ENCODE measurements at regions of chr5 and their contacts with region 1.

Region 1: GRCh38 chr5:58460732-58461286 is 923 bp upstream of the PLK2 start:
- DNase-seq: peak; percentile 94
- H3K4me3 Mint-ChIP-seq: peak overlapping the region; percentile 92
- H3K27ac Mint-ChIP-seq: peak overlapping the region; percentile 96
- H3K4me1 Mint-ChIP-seq: peaks cover 29% of the 10 kb centered on the region
- H3K27me3 Mint-ChIP-seq: no peaks in the 10 kb centered on the region
- CTCF ChIP-seq: peak; percentile 72

Region 2: GRCh38 chr5:57298295-57298984 is 1162.4 kb before region 1 on chr5:
- CTCF ChIA-PET with region 1: interaction called, 43 read pairs
- POLR2A ChIA-PET with region 1: interaction called, 8 read pairs
- intact Hi-C with region 1: loop called (anchors 1 kb)
- DNase-seq: peak; percentile 89
- H3K4me3 Mint-ChIP-seq: no peak overlapping the region
- H3K27ac Mint-ChIP-seq: no peak overlapping the region
- H3K4me1 Mint-ChIP-seq: peaks cover 21% of the 10 kb centered on the region
- H3K27me3 Mint-ChIP-seq: no peaks in the 10 kb centered on the region
- CTCF ChIP-seq: peak; percentile 65

Region 3: DNA sequence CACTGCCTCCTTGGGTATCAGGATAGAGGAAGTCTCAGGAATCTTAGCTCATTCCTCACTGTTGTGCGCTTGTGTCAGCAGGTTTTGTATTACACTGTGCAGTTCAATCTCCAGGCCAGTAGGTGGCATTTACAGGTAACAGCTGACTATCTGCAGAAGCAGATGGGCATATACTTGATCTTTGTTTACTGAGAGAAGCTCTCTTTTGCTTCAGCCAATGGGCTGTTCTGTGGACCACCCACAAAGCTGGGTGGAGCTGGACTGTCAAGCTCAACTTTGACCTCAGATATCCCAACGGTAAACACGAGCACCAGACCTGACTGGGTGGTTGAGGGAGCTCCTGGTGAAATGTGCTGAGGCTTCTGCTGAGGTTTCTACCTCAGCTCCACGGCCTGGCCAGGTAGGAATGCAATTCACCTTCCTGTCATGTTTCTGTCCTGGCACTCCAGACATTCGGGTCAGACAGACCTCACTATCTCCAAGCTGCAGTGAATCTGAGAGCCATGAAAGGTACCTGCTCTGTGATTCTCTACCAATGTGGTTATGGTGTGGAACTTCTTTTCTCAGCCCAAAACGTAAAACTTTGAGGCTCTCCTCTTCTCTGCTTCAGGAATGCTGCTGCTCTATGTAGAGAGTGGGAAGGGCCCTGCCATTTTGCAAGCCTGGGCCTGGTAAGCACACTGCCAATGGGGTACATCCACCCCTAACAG is 810.3 kb before region 1 on chr5:
- CTCF ChIA-PET with region 1: interaction called, 40 read pairs
- POLR2A ChIA-PET with region 1: interaction called, 15 read pairs
- intact Hi-C with region 1: loop called (anchors 1 kb)
- DNase-seq: peak; percentile 77
- H3K4me3 Mint-ChIP-seq: no peak overlapping the region
- H3K27ac Mint-ChIP-seq: no peak overlapping the region
- H3K4me1 Mint-ChIP-seq: no peaks in the 10 kb centered on the region
- H3K27me3 Mint-ChIP-seq: no peaks in the 10 kb centered on the region
- CTCF ChIP-seq: peak; percentile 75

Region 4: GRCh38 chr5:57834829-57835608 is 625.8 kb before region 1 on chr5:
- CTCF ChIA-PET with region 1: interaction called, 20 read pairs
- POLR2A ChIA-PET with region 1: interaction called, 20 read pairs
- intact Hi-C with region 1: no loop called
- DNase-seq: peak; percentile 78
- H3K4me3 Mint-ChIP-seq: no peak overlapping the region
- H3K27ac Mint-ChIP-seq: no peak overlapping the region
- H3K4me1 Mint-ChIP-seq: peaks cover 43% of the 10 kb centered on the region
- H3K27me3 Mint-ChIP-seq: no peaks in the 10 kb centered on the region
- CTCF ChIP-seq: no peak

Region 5: DNA sequence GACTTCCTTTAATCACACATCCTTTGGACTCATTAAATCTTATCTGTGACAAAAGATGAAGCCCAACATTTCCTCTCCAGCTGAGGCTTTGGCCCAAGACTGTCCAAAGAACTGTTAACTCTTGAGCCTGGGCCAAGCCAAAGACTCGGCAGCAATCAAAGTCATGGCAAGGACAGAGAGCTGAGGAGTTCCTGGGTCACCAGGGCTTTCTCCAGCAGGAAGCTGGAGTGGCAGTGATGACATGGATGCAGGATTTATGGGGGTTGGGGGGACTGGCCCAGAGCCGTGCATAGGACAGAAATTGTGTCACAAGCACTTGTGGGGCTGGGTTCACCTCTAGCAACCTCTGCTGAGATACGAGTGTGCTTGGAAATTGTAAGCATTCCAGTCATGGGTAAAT is 441.2 kb before region 1 on chr5:
- CTCF ChIA-PET with region 1: interaction called, 12 read pairs
- POLR2A ChIA-PET with region 1: interaction called, 34 read pairs
- intact Hi-C with region 1: no loop called
- DNase-seq: no peak
- H3K4me3 Mint-ChIP-seq: no peak overlapping the region
- H3K27ac Mint-ChIP-seq: no peak overlapping the region
- H3K4me1 Mint-ChIP-seq: peaks cover 22% of the 10 kb centered on the region
- H3K27me3 Mint-ChIP-seq: no peaks in the 10 kb centered on the region
- CTCF ChIP-seq: no peak

Region 6: GRCh38 chr5:58259685-58260152 is 201.1 kb before region 1 on chr5:
- CTCF ChIA-PET with region 1: interaction called, 4 read pairs
- POLR2A ChIA-PET with region 1: interaction called, 13 read pairs
- intact Hi-C with region 1: loop called (anchors 5 kb)
- DNase-seq: peak; percentile 80
- H3K4me3 Mint-ChIP-seq: peak overlapping the region; percentile 57
- H3K27ac Mint-ChIP-seq: peak overlapping the region; percentile 74
- H3K4me1 Mint-ChIP-seq: peaks cover 10% of the 10 kb centered on the region
- H3K27me3 Mint-ChIP-seq: no peaks in the 10 kb centered on the region
- CTCF ChIP-seq: no peak

Measured in MCF 10A (cell line).